Left cardiac atrium (tissue), 4 donors: ENCODE measurements at regions of chr7 and their contacts with region 1.

Region 1: GRCh38 chr7:50270531-50271018 is 33.9 kb upstream of the IKZF1 start:
- DNase-seq: no peak
- ATAC-seq: no peak

Region 2: GRCh38 chr7:50212666-50213621 is 57.6 kb before region 1 on chr7:
- intact Hi-C with region 1: loop called in 1 of 2 experiments (anchors 10 kb)
- DNase-seq: no peak
- ATAC-seq: peak in 1 of 2 donors; percentile 47

Region 3: GRCh38 chr7:50560865-50561351 is 290.3 kb after region 1 on chr7:
- intact Hi-C with region 1: no loop called
- DNase-seq: no peak
- ATAC-seq: peak in 1 of 2 donors; percentile 29

Region 4: GRCh38 chr7:51045319-51046102 is 774.9 kb after region 1 on chr7:
- intact Hi-C with region 1: no loop called
- DNase-seq: no peak
- ATAC-seq: peak in 1 of 2 donors; percentile 24